ENCODE measurements at regions of chr14 and their contacts with region 1.

Region 1: GRCh38 chr14:39102969-39103957 is at the start of gene SEC23A:
- DNase-seq: peak; percentile 91
- H3K4me3 ChIP-seq: peak within 1 kb of the TSS; percentile 75
- H3K27ac ChIP-seq: peak within 1 kb of the TSS; percentile 46
- H3K4me1 ChIP-seq: peaks cover 17% of the 10 kb centered on the region
- CTCF ChIP-seq: peak; percentile 33; the same call in 1 of the 2 replicates
- total RNA-seq, gene SEC23A: 55.7 and 68.8 TPM in 2 replicates

Region 2: DNA sequence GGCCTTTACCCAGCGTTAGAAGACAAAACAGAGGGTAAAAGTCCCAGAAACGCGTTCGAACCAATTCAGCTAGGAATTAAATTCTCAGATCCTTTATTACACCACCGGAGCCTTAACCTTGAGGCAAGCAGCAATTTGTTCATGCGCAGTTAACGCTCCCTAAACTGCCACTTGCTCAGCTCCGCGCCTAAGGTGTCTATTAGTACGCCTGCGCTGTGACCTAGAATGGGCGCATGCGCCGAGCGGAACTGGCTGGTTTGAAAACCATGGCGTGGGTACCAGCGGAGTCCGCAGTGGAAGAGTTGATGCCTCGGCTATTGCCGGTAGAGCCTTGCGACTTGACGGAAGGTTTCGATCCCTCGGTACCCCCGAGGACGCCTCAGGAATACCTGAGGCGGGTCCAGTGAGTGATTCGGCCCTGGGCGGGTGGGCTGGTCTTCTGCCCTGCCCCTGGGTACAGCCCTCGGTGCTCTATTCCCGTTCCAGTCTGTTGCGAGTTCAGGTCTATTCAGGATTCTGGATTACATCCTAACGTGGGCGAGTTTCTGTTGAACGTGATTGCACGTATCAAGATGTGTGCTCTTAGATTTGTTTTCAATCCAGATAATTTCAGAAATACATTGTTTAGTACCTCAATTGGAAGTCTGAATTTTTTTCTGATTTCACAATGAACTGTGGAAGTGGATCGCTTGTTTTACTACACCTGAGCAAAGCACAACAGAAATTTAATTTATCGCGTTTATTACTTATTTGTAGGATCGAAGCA is 11.0 kb after region 1 on chr14 and contains the start of gene GEMIN2:
- CTCF ChIA-PET with region 1: interaction called, 4 read pairs
- POLR2A ChIA-PET with region 1: interaction called, 49 read pairs
- intact Hi-C with region 1: no loop called
- DNase-seq: peak; percentile 98
- H3K4me3 ChIP-seq: peak within 1 kb of the TSS; percentile 89
- H3K27ac ChIP-seq: peak within 1 kb of the TSS; percentile 86
- H3K4me1 ChIP-seq: peaks cover 31% of the 10 kb centered on the region
- CTCF ChIP-seq: no peak
- total RNA-seq, gene GEMIN2: 53.4 and 72.0 TPM in 2 replicates

Region 3: DNA sequence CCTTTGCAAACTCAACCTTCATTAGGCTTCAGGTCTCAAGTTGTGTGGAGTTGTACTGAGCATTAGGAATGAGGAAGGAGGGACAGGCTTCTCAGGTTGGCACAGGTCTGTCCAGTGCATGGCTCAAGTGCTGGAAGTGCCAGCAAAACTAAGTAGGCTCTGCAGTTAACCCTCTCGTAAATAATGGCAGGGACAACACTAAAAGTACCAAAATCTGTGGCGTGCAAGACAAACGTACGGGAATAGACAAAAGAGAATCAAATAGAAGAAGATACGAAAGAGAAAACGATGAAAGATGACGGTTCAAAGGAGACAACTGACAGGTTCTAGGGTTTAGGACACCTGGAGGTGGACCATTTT is 66.3 kb after region 1 on chr14:
- CTCF ChIA-PET with region 1: no interaction called
- POLR2A ChIA-PET with region 1: interaction called, 14 read pairs
- intact Hi-C with region 1: no loop called
- DNase-seq: no peak
- H3K4me3 ChIP-seq: peak overlapping the region; percentile 87
- H3K27ac ChIP-seq: peak overlapping the region; percentile 75
- H3K4me1 ChIP-seq: peaks cover 56% of the 10 kb centered on the region
- CTCF ChIP-seq: no peak

Region 4: GRCh38 chr14:39266871-39267591 is 163.8 kb after region 1 on chr14:
- CTCF ChIA-PET with region 1: no interaction called
- POLR2A ChIA-PET with region 1: interaction called, 11 read pairs
- intact Hi-C with region 1: loop called (anchors 5 kb)
- DNase-seq: peak; percentile 95
- H3K4me3 ChIP-seq: peak overlapping the region; percentile 88
- H3K27ac ChIP-seq: peak overlapping the region; percentile 84
- H3K4me1 ChIP-seq: peaks cover 29% of the 10 kb centered on the region
- CTCF ChIP-seq: no peak

Region 5: GRCh38 chr14:39291701-39292100 is 188.4 kb after region 1 on chr14:
- CTCF ChIA-PET with region 1: no interaction called
- POLR2A ChIA-PET with region 1: no interaction called
- intact Hi-C with region 1: no loop called
- DNase-seq: no peak
- H3K4me3 ChIP-seq: no peak overlapping the region
- H3K27ac ChIP-seq: no peak overlapping the region
- H3K4me1 ChIP-seq: no peaks in the 10 kb centered on the region
- CTCF ChIP-seq: no peak

Region 6: GRCh38 chr14:39368261-39368959 is 265.1 kb after region 1 on chr14:
- CTCF ChIA-PET with region 1: no interaction called
- POLR2A ChIA-PET with region 1: no interaction called
- intact Hi-C with region 1: loop called (anchors 1 kb)
- DNase-seq: peak; percentile 56
- H3K4me3 ChIP-seq: no peak overlapping the region
- H3K27ac ChIP-seq: no peak overlapping the region
- H3K4me1 ChIP-seq: no peaks in the 10 kb centered on the region
- CTCF ChIP-seq: peak; percentile 85

Region 7: DNA sequence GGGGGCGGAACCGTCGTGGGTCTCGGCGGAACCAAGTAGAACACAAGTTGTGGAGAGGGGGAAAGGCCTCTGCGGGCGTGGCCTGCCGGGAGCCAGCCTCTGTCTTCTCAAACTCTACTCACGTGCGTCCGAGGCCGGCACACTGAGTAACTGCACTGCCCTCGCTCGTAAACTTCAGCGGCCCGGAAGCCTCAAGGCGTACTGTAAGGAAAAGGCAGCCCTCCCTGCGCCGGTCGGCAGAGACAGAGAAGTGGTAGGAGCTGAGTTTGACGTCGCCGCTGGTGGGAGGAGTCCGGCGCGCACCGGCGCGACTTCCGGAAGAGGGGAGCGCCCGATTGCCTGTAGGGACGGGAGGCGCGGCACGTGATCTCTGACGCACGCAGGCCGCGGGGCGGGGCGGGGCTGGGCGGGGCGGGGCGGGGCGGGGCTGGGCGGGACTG is 328.9 kb after region 1 on chr14 and contains the start of gene FBXO33:
- CTCF ChIA-PET with region 1: interaction called, 4 read pairs
- POLR2A ChIA-PET with region 1: interaction called, 14 read pairs
- intact Hi-C with region 1: loop called (anchors 2 kb)
- DNase-seq: peak; percentile 96
- H3K4me3 ChIP-seq: peak within 1 kb of the TSS; percentile 90
- H3K27ac ChIP-seq: peak within 1 kb of the TSS; percentile 91
- H3K4me1 ChIP-seq: peaks cover 33% of the 10 kb centered on the region
- CTCF ChIP-seq: no peak
- total RNA-seq, gene FBXO33: 14.2 and 19.8 TPM in 2 replicates

Region 8: DNA sequence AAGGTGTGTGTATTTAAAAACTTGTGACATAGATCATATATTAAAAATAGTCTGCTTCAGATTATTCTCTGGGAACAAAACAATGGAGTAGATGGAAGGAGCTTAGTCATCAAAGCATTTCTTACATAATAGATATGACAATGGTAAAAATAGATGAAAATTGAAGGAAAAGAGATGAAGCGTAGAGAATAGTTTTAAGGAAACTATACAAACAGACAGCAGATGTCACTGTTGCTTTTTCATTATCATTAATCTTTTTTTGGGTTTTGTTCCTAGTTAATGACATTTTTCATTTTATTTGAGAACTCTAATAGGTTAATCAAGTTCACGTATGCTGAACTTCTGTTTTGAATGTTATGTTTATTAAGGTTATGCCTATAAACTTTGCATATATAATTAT is 478.2 kb after region 1 on chr14:
- CTCF ChIA-PET with region 1: no interaction called
- POLR2A ChIA-PET with region 1: no interaction called
- intact Hi-C with region 1: no loop called
- DNase-seq: peak; percentile 3
- H3K4me3 ChIP-seq: no peak overlapping the region
- H3K27ac ChIP-seq: no peak overlapping the region
- H3K4me1 ChIP-seq: no peaks in the 10 kb centered on the region
- CTCF ChIP-seq: peak; percentile 73

Measured in OCI-LY7 (cell line).